PC-3 (cell line): ENCODE measurements at regions of chr14 and their contacts with region 1.

Region 1: DNA sequence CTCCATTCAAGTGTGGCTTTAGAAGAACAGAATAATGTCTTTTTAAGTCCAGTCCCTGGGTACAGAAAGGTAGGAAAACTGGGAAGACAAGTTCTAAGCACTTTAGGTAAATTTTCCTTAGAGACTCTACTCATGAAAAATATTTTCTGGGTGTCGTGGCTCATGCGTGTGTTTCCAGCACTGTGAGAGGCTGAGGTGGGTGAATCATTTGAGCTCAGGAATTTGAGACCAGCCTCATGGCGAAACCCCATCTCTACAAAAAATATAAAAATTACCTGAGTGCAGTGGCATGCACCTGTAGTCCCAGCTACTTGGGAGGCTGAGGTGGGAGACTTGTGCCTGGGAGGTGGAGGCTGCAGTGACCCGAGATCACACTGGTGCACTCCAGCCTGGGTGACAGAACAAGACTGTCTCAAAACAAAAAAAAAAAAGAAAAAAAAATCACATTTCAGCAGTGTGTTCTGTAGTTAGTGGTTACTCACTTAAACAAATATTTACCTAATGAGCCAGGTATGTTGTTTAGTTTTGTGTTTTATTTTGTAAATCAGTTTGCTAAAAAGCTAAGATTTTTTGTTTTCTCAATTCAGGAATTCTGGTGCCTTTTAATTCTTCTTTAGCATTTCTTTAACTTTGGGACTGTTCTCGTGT is 52.3 kb upstream of the RD3L start:
- DNase-seq: peak; percentile 94
- ATAC-seq: peak; percentile 82
- H3K4me3 ChIP-seq: peak overlapping the region; percentile 49
- H3K27ac ChIP-seq: peak overlapping the region; percentile 81
- H3K4me1 ChIP-seq: peaks cover 42% of the 10 kb centered on the region
- H3K27me3 ChIP-seq: no peaks in the 10 kb centered on the region
- CTCF ChIP-seq: no peak

Region 2: DNA sequence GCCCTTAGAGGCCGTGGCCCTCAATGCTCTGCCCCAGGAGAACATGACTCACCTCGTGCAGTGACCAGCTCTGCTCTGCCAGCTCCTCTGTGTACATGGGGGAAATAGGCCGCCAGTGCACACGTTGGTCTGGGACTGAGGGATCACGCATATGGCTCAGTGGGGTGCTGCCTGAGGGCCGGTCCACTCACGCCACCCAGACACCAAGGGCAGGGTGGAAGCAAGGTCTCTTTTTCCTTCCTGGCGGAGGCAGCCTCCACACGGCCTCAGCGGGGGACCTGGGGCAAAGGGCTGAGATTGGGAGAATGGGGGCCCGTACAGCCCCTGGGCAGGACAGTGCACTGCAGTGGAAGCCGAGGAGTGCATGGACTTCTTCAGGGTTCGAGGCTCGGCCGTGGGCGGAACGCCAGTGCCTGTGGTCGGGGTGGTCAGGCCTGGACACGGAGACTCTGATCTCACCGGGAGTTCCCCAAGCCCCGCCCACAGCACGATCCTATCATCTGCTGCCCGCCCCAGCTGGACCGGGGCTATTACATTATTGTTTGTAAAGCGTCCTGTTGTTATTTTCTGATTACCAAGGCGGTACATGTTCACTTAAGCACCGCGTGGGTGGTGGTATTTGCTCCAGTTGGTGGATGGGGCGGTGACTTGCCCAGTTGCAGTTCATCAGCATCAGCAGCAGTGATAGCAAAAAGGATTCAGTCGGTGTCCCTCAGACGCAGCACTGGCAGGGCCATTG is 105.2 kb before region 1 on chr14:
- CTCF ChIA-PET with region 1: no interaction called
- POLR2A ChIA-PET with region 1: no interaction called
- intact Hi-C with region 1: no loop called
- DNase-seq: peak; percentile 7
- ATAC-seq: peak; percentile 80
- H3K4me3 ChIP-seq: no peak overlapping the region
- H3K27ac ChIP-seq: no peak overlapping the region
- H3K4me1 ChIP-seq: 0 out of 2 replicates have a peak, but pooled peaks cover 3% of the 10 kb centered on the region
- H3K27me3 ChIP-seq: no peaks in the 10 kb centered on the region
- CTCF ChIP-seq: no peak

Region 3: GRCh38 chr14:104040539-104040938 is 45.9 kb after region 1 on chr14:
- CTCF ChIA-PET with region 1: no interaction called
- POLR2A ChIA-PET with region 1: no interaction called
- intact Hi-C with region 1: loop called (anchors 5 kb)
- DNase-seq: no peak
- ATAC-seq: no peak
- H3K4me3 ChIP-seq: no peak overlapping the region
- H3K27ac ChIP-seq: no peak overlapping the region
- H3K4me1 ChIP-seq: peaks cover 15% of the 10 kb centered on the region
- H3K27me3 ChIP-seq: no peaks in the 10 kb centered on the region
- CTCF ChIP-seq: no peak